Right ventricle myocardium inferior (tissue), 1 donor: ENCODE measurements at regions of chr5 and their contacts with region 1.

Region 1: DNA sequence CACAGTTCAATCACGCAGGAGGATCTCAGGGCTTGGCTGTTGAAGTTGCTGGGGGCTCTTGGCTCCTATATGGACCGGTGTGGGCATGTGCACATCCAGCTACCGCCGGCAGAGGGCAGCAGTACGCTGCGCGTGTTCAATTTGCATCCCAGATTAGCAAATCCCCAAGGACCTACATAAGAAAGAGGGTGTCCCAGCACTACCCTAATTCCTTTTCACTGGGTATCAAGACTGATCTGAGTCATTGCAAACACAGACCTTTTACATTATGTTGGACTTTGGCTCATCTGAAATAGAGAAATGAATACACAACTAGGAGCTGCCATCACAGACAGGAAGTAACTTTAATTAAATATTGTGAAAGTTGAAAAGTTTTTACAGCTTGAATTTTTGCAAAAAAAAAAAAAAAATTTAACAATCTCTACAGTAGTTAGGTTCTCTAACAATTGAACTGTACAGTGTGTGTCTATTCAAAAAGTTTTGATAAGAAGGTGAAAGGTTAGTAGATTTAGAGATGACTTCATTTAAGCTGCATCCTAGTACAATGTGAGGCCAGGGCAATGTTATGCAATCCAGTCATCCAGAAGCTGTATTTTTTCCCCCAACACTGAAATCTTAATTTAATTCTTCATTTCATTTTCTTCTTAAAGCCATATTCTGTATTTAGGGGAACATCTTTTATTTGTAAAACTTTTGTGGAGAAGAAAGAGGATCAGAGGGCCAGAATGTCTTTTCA is 404.0 kb downstream of the EBF1 start:
- DNase-seq: peak; percentile 84
- ATAC-seq: peak; percentile 62

Region 2: DNA sequence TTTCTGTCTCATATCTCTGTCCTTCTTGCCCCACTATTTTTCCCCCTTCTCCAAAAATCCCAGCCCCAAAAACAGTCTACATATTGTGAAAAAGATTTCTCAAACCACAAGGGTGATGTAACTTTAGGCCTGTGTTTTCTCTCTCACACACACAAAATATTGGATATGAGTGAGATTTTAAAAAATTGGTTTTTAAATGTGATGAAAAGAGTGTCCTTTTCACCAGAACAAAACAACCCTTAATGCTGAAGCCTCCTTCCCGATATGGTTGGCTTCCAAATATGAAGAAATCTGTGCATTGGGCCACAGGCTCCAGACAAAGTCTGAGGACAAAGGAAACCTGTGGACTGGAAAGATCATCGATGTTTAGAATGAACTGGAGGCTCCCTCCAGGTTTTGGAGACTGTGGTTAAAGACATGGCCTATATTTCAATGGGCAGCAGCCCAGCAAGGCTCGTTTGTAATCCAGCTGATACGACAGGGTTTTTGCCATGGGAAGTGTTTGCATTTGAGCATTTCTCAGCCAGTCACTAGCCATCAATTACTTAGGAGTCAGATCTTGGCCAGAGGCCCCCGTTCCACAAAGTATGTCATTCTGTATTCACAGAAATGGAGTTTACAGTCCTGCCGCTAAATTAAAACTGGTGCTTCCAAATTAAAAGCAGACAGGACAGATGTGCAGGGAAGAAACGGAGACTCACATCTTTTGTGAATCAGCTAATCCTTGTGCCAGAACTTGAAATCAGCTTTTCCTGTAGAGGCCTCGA is 142.4 kb before region 1 on chr5:
- intact Hi-C with region 1: loop called (anchors 10 kb)
- DNase-seq: no peak
- ATAC-seq: peak; percentile 77